Activated naive CD4-positive, alpha-beta T cell treated with anti-CD3 and anti-CD28 coated beads for 36 hours (primary cell): ENCODE measurements at regions of chr14 and their contacts with region 1.

Region 1: GRCh38 chr14:73785873-73786695 is 65.5 kb upstream of the PTGR2 start:
- DNase-seq: peak; percentile 75
- H3K4me3 Mint-ChIP-seq: peak overlapping the region; percentile 90
- H3K27ac Mint-ChIP-seq: peak overlapping the region; percentile 91
- H3K4me1 Mint-ChIP-seq: peaks cover 56% of the 10 kb centered on the region
- H3K27me3 Mint-ChIP-seq: no peaks in the 10 kb centered on the region

Region 2: DNA sequence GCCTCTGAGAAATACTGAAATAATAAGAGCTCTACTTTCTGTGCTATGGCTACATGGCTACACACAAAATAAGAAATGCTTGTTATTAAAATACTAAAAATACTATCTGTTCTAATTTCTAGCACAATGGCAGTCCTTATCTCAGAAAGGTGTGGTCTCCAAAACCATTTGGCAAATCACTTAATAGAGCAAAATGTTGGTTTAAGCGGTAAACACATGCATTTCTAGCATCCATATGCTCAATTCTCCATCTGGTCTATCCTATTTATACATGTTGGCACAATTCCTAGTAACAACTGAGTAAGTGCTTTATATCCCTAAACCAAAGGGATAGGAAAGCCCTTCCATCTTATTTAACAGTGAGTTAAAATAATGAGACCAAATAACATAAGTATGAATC is 441.8 kb before region 1 on chr14:
- CTCF ChIA-PET with region 1: no interaction called
- intact Hi-C with region 1: no loop called
- DNase-seq: no peak
- H3K4me3 Mint-ChIP-seq: no peak overlapping the region
- H3K27ac Mint-ChIP-seq: no peak overlapping the region
- H3K4me1 Mint-ChIP-seq: no peaks in the 10 kb centered on the region
- H3K27me3 Mint-ChIP-seq: no peaks in the 10 kb centered on the region

Region 3: GRCh38 chr14:73713803-73714655 is 72.1 kb before region 1 on chr14 and contains the start of gene PNMA1:
- CTCF ChIA-PET with region 1: no interaction called
- intact Hi-C with region 1: loop called (anchors 2 kb)
- DNase-seq: peak; percentile 84
- H3K4me3 Mint-ChIP-seq: peak within 1 kb of the TSS; percentile 99
- H3K27ac Mint-ChIP-seq: peak within 1 kb of the TSS; percentile 85
- H3K4me1 Mint-ChIP-seq: peaks cover 13% of the 10 kb centered on the region
- H3K27me3 Mint-ChIP-seq: no peaks in the 10 kb centered on the region
- total RNA-seq, gene PNMA1: 18.5 to 19.2 TPM

Region 4: GRCh38 chr14:73753959-73754882 is 31.9 kb before region 1 on chr14:
- CTCF ChIA-PET with region 1: interaction called, 27 read pairs
- intact Hi-C with region 1: loop called (anchors 5 kb)
- DNase-seq: peak; percentile 85
- H3K4me3 Mint-ChIP-seq: peak overlapping the region; percentile 91
- H3K27ac Mint-ChIP-seq: peak overlapping the region; percentile 95
- H3K4me1 Mint-ChIP-seq: peaks cover 88% of the 10 kb centered on the region
- H3K27me3 Mint-ChIP-seq: no peaks in the 10 kb centered on the region

Region 5: DNA sequence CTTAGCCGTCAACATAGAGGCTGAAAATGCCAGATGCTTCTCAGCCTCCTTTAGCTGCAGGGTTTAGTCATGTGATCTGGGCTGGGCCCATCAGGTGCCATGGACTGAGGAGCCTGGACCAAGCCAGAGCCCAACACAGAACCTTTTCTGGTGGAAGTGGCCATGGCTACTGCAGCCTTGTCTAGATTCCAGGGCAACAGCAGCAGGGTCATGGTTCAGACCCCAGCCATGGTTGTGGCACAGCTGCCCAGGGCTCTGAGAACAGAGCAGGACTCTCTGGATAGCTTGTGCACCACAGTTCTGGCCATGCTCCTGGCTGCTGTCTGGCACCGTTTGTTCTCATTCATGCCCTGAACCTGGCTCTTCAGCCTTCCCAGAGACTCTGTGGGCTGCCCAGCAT is 18.6 kb after region 1 on chr14:
- CTCF ChIA-PET with region 1: no interaction called
- intact Hi-C with region 1: no loop called
- DNase-seq: no peak
- H3K4me3 Mint-ChIP-seq: no peak overlapping the region
- H3K27ac Mint-ChIP-seq: no peak overlapping the region
- H3K4me1 Mint-ChIP-seq: no peaks in the 10 kb centered on the region
- H3K27me3 Mint-ChIP-seq: no peaks in the 10 kb centered on the region

Region 6: DNA sequence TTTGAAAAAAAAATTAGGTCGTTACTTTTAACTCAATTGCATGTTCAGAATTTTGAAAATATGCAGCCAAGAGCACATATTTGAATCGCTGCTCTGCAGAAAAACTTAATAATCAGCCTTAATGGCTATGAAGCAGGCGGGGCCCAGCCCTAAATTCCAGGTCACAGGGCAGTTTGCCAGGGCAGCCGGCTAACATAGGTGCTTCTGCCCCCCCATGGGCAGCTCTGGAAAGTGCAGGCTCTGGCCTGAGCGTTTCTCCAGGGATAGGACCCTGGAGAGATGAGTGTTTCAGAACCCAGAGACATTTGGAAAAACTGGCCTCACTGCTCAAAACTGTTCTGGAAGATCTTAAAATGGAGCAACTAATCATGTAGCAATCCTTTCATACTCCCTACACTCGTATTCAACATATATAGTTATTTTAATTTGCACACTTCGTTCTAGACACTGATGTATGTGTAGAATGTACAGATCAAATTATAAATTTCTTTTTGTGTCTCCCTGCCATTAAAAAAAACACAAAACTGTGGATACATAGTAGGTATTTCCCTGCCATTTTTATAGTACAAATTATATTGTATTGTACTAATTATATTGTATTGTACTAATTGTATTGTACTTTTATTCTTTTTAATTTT is 39.6 kb after region 1 on chr14:
- CTCF ChIA-PET with region 1: interaction called, 8 read pairs
- intact Hi-C with region 1: loop called (anchors 1 kb)
- DNase-seq: peak; percentile 90
- H3K4me3 Mint-ChIP-seq: no peak overlapping the region
- H3K27ac Mint-ChIP-seq: no peak overlapping the region
- H3K4me1 Mint-ChIP-seq: peaks cover 14% of the 10 kb centered on the region
- H3K27me3 Mint-ChIP-seq: no peaks in the 10 kb centered on the region

Region 7: GRCh38 chr14:73886449-73887317 is 100.6 kb after region 1 on chr14 and contains the start of gene ZNF410:
- CTCF ChIA-PET with region 1: no interaction called
- intact Hi-C with region 1: loop called (anchors 2 kb)
- DNase-seq: peak; percentile 95
- H3K4me3 Mint-ChIP-seq: peak within 1 kb of the TSS; percentile 88
- H3K27ac Mint-ChIP-seq: peak within 1 kb of the TSS; percentile 94
- H3K4me1 Mint-ChIP-seq: peaks cover 46% of the 10 kb centered on the region
- H3K27me3 Mint-ChIP-seq: no peaks in the 10 kb centered on the region
- total RNA-seq, gene ZNF410: 51.0 to 56.8 TPM